OCI-LY7 (cell line): ENCODE measurements at regions of chr9 and their contacts with region 1.

Region 1: DNA sequence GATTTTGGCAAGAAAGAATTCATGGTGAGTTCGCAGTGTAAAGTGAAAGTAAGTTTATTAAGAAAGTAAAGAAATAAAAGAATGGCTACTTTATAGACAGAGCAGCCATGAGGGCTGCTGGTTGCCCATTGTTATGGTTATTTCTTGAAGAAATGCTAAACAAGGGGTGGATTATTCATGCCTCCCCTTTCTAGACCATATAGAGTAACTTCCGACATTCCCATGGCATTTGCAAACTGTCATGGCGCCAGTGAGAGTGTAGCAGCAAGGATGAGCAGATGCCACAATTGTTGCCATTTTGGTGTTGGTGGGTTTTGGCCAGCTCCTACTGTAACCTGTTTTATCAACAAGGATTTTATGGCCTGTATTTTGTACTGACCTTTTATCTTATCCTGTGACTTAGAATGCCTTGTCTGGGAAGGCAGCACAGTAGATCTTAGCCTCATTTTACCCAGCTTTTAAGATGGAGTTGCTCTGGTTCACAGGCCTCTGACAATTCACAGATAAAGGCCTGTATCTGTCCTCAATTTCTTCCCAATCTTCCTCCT is 1026.1 kb upstream of the DMAC1 start:
- DNase-seq: no peak
- H3K4me3 ChIP-seq: no peak overlapping the region
- H3K27ac ChIP-seq: no peak overlapping the region
- H3K4me1 ChIP-seq: no peaks in the 10 kb centered on the region
- CTCF ChIP-seq: no peak

Region 2: GRCh38 chr9:8508671-8509290 is 316.9 kb before region 1 on chr9:
- CTCF ChIA-PET with region 1: no interaction called
- POLR2A ChIA-PET with region 1: interaction called, 10 read pairs
- intact Hi-C with region 1: no loop called
- DNase-seq: no peak
- H3K4me3 ChIP-seq: no peak overlapping the region
- H3K27ac ChIP-seq: no peak overlapping the region
- H3K4me1 ChIP-seq: no peaks in the 10 kb centered on the region
- CTCF ChIP-seq: no peak

Region 3: DNA sequence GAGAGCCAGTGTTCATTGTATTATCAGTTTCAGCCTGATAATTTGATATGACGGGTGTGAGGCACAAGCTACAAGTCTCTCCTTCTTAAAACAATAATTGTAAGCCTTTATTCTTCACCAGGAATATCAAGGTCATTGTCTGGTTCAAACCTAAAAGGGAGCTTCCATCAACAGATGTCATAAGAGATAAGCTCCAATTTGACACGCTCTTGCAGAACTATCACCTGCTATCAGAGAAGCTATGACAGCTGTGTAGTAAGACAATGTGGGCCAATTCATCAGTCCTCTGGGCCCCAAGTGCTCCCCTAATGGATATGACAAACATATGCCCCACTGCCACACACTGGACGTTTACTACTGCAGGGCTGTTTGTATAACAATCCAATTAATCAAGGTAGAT is 15.9 kb before region 1 on chr9:
- CTCF ChIA-PET with region 1: no interaction called
- POLR2A ChIA-PET with region 1: no interaction called
- intact Hi-C with region 1: no loop called
- DNase-seq: no peak
- H3K4me3 ChIP-seq: no peak overlapping the region
- H3K27ac ChIP-seq: no peak overlapping the region
- H3K4me1 ChIP-seq: no peaks in the 10 kb centered on the region
- CTCF ChIP-seq: no peak